Activated CD8-positive, alpha-beta T cell treated with anti-CD3 and anti-CD28 coated beads, Interleukin-2, amount 10 ng/mL, durations not matched to agents 7 days and 5 days (primary cell): ENCODE measurements at regions of chr19 and their contacts with region 1.

Region 1: DNA sequence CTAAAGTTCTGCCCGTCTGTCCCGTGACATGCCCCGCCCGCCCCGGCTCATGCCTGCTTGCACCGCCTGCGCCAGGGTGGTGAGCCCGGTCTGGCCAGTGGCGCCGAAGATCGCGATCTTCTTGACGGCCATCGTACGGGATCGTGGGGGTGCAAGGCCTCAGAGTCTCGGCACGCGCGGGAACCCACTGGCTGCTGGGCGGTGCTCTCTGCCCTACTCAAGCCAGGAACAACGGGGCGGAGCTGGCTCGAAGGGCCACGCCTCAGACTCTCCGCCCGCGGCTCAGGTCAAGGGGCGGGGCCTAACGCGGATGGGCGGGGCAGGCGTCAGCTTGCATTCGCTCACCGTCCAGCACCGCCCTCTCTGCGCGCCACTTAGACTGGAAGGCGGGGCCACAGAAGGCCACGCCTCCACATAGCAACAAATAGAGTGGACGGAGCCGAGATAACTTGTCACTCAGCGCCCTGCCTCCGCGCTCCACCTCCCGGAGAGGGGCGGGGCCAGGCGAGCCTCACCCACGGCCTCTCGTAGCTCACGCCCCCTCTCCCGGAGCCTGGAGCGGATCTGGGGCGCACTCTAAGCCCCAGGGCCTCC is at the start of gene BLVRB:
- DNase-seq: peak; percentile 99
- ATAC-seq: peak; percentile 88
- H3K4me3 Mint-ChIP-seq: peak within 1 kb of the TSS; percentile 86
- H3K27ac Mint-ChIP-seq: peak within 1 kb of the TSS; percentile 86
- H3K4me1 Mint-ChIP-seq: peaks cover 28% of the 10 kb centered on the region
- H3K27me3 Mint-ChIP-seq: peaks cover 20% of the 10 kb centered on the region
- total RNA-seq, gene BLVRB: 15.1 to 16.5 TPM

Region 2: DNA sequence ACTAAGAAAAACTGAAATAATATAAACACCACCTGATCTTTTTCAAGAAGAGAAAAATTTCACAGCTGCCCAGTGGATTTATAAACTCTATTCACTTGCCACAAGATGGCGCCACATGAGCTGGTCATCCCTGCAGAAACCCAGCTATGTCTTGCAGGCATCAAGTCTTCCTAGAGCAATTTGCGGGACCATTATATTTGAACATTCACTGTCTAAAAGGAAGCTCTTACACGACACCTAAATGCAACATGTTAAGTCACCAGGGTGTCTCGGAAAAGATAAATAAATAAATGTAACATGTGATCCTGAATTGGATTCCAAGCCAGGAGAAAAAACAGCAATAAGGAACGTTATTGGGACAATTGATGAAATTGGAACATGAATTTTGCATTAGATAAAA is 160.3 kb before region 1 on chr19:
- CTCF ChIA-PET with region 1: interaction called, 21 read pairs
- POLR2A ChIA-PET with region 1: interaction called, 4 read pairs
- DNase-seq: peak; percentile 89
- ATAC-seq: peak; percentile 82
- H3K4me3 Mint-ChIP-seq: no peak overlapping the region
- H3K27ac Mint-ChIP-seq: no peak overlapping the region
- H3K4me1 Mint-ChIP-seq: peaks cover 3% of the 10 kb centered on the region
- H3K27me3 Mint-ChIP-seq: no peaks in the 10 kb centered on the region

Region 3: DNA sequence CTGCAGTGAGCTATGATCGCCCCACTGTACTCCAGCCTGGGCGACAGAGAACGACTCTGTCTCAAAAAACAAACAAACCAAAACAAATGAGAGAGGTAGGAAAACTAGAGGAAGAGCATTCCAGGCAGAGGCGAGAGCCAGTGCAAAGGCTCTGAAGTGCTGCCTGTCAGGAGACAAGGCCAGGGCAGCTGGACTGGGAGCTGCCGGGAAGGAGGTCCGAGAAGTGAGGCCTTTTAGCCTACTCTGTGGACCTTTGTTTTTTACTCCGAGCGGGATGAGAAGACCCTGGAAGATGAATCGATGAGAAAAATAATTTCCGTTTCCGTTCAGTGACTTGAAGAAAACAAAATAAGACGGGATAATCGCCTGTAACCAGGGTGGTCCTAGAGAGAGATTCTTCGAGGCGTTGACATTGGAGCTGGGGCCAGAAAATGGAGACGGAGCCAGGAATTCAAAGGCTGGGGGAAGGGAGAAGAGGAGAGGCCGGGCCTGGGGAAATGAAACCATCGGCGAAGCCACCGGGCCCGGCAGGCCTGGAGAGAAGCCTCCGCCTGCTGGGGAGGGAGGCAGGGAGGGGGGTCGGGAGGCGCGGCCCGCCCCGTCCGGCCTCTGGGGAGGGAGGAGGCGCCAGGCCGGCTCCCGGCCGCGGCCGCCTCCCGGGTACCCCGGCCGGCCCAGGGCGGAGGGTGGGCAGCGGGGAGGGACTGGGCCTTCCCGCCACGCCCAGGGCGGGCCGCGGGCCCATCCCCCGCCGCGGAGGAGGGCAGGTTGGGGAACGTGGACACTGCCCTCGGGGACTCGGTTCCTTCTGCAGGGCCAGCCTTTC is 32.0 kb before region 1 on chr19:
- CTCF ChIA-PET with region 1: interaction called, 11 read pairs
- POLR2A ChIA-PET with region 1: no interaction called
- DNase-seq: peak; percentile 67
- ATAC-seq: peak; percentile 96
- H3K4me3 Mint-ChIP-seq: peak overlapping the region; percentile 84
- H3K27ac Mint-ChIP-seq: peak overlapping the region; percentile 95
- H3K4me1 Mint-ChIP-seq: peaks cover 15% of the 10 kb centered on the region
- H3K27me3 Mint-ChIP-seq: no peaks in the 10 kb centered on the region

Region 4: DNA sequence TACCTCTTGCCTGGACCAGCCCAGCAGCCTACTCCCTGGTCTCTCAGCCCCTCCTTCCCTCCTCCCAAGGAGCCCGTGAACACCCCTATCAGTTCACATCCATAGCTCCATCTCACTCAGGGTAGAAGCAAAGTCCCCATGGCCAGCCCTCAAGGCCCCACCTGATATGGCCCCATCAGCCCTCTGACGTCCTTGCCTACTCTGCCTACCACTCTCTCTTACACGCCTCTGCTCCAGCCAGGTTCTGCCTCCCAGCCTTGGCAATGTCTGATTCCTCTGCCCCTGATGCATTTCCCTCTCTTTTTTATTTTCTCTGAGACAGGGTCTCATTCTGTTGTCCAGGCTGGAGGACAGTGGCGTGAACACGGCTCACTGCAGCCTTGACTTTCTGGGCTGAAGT is 13.6 kb before region 1 on chr19:
- CTCF ChIA-PET with region 1: interaction called, 51 read pairs
- POLR2A ChIA-PET with region 1: interaction called, 4 read pairs
- DNase-seq: no peak
- ATAC-seq: no peak
- H3K4me3 Mint-ChIP-seq: no peak overlapping the region
- H3K27ac Mint-ChIP-seq: no peak overlapping the region
- H3K4me1 Mint-ChIP-seq: no peaks in the 10 kb centered on the region
- H3K27me3 Mint-ChIP-seq: no peaks in the 10 kb centered on the region

Region 5: DNA sequence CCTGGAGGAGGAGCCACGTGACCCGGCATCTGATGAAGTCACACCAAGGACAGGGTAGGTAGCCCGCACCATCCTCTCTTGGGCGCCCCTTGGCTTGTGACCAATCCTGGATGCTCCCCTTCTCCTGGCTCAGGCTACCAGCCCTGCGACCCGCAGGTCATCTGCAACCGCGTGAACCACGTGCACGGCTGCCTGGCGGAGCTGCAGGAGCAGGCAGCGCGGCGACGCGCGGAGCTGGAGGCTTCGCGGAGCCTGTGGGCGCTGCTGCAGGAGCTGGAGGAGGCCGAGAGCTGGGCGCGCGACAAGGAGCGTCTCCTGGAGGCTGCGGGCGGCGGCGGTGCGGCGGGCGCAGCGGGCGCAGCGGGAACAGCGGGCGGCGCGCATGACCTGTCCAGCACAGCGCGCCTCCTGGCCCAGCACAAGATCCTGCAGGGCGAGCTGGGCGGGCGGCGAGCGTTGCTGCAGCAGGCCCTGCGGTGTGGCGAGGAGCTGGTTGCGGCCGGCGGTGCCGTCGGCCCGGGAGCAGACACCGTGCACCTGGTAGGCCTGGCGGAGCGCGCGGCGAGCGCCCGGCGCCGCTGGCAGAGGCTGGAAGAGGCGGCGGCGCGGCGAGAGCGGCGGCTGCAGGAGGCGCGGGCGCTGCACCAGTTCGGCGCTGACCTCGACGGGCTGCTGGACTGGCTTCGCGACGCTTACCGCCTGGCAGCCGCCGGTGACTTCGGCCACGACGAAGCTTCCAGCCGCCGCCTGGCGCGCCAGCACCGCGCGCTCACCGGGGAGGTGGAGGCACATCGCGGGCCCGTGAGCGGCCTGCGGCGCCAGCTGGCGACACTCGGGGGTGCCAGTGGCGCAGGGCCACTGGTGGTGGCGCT is 47.1 kb after region 1 on chr19:
- CTCF ChIA-PET with region 1: no interaction called
- POLR2A ChIA-PET with region 1: no interaction called
- DNase-seq: no peak
- ATAC-seq: peak; percentile 55
- H3K4me3 Mint-ChIP-seq: no peak overlapping the region
- H3K27ac Mint-ChIP-seq: no peak overlapping the region
- H3K4me1 Mint-ChIP-seq: peaks cover 2% of the 10 kb centered on the region
- H3K27me3 Mint-ChIP-seq: peaks cover 45% of the 10 kb centered on the region

Region 6: DNA sequence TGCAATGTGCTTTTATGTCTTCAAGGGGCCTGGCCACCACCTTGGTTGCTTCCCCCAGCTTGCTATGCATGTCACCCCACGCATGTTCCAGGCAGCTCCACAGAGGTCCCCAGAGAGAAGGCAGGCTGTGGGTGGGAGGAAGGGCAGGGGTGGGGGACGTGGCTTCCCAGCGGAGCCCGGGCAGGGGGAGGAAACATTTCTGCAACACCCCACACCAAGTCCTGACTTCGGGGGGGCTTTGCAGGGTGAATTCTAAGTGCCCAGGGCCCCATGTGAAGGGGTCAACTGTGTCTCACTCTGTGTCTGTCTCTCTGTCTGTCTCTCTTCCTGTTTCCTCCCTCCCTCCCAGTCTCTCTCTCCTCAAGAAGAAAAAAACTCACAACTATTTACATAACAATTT is 175.1 kb after region 1 on chr19:
- CTCF ChIA-PET with region 1: interaction called, 20 read pairs
- POLR2A ChIA-PET with region 1: no interaction called
- DNase-seq: no peak
- ATAC-seq: no peak
- H3K4me3 Mint-ChIP-seq: no peak overlapping the region
- H3K27ac Mint-ChIP-seq: no peak overlapping the region
- H3K4me1 Mint-ChIP-seq: peaks cover 6% of the 10 kb centered on the region
- H3K27me3 Mint-ChIP-seq: no peaks in the 10 kb centered on the region